OCI-LY7 (cell line): ENCODE measurements at regions of chr1 and their contacts with region 1.

Region 1: DNA sequence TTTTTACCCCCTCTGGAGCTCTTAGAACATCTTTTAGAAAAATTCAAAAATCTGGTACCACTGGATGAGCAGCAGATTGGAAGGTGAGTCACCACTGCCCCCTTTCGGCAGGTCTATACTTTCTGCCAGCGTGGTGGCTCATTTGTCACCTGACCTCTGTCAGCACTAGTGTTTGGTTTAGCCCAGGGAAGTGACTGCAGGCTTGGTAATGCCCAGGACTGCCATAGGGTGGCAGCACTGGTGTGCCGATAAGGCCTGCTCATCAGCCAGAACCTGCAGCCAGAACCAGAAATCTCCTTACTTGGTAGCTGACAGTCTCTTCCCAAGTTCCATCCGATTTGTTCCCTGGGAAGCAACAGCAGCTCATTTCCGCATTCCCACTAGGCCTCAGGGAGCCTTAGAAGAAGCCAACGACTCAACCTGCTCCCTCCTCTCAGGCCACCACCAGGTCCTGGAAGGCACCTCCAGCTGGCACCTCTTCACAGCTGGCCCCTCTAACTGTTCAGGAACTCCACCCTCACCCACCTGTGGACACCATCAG is 6.8 kb downstream of the SMIM12 start:
- DNase-seq: peak; percentile 91
- H3K4me3 ChIP-seq: no peak overlapping the region
- H3K27ac ChIP-seq: no peak overlapping the region
- H3K4me1 ChIP-seq: no peaks in the 10 kb centered on the region
- CTCF ChIP-seq: peak; percentile 99

Region 2: GRCh38 chr1:34786521-34787325 is 66.0 kb before region 1 on chr1:
- CTCF ChIA-PET with region 1: no interaction called
- POLR2A ChIA-PET with region 1: no interaction called
- intact Hi-C with region 1: loop called (anchors 1 kb)
- DNase-seq: peak; percentile 68
- H3K4me3 ChIP-seq: no peak overlapping the region
- H3K27ac ChIP-seq: no peak overlapping the region
- H3K4me1 ChIP-seq: no peaks in the 10 kb centered on the region
- CTCF ChIP-seq: peak; percentile 86

Region 3: DNA sequence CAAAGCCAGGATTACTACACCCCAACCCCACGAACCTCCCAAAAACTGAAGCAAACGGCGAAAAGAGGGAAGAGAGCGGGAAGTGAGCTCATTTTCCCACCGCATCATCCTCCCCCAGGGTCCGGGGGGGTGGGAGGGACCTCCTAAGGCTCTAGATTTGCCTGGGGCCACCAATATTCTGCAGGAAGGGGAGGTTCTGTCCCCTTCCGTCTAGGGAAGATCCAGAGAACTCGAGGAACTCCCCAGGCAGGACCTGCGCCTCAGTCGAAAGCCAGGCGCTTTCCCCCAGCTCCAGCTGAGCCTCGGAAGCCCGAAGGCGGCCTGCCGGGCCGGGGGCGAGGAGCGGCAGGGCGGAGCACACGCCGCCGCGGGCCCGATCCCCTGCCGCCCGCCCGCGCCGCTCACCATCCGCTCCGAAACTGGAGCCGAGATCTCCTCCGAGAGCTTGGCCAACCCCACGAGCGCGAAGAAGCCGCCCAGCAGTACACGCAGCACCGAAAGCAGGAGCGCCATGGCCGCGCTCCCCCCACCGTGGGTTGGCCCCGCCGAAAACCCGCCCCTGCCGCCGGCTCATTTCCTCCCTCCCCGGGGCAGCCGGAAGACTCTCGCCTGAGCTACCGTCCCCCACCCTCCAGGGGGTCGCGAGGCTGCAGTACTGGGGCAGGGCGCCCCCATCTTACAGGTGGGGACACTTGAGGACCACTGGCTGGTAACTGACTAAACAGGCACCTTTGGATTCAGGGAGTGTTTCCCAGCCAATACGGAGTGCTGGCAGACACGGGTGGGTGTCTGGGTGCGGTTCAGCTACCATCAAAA is 132.3 kb after region 1 on chr1 and contains the start of gene TMEM35B:
- CTCF ChIA-PET with region 1: no interaction called
- POLR2A ChIA-PET with region 1: interaction called, 3 read pairs
- intact Hi-C with region 1: loop called (anchors 10 kb)
- DNase-seq: peak; percentile 78
- H3K4me3 ChIP-seq: peak within 1 kb of the TSS; percentile 76
- H3K27ac ChIP-seq: peak within 1 kb of the TSS; percentile 39
- H3K4me1 ChIP-seq: peaks cover 30% of the 10 kb centered on the region
- CTCF ChIP-seq: peak; percentile 48
- total RNA-seq, gene TMEM35B: 15.5 and 16.5 TPM in 2 replicates